ENCODE measurements at regions of chr17 and their contacts with region 1.

Region 1: DNA sequence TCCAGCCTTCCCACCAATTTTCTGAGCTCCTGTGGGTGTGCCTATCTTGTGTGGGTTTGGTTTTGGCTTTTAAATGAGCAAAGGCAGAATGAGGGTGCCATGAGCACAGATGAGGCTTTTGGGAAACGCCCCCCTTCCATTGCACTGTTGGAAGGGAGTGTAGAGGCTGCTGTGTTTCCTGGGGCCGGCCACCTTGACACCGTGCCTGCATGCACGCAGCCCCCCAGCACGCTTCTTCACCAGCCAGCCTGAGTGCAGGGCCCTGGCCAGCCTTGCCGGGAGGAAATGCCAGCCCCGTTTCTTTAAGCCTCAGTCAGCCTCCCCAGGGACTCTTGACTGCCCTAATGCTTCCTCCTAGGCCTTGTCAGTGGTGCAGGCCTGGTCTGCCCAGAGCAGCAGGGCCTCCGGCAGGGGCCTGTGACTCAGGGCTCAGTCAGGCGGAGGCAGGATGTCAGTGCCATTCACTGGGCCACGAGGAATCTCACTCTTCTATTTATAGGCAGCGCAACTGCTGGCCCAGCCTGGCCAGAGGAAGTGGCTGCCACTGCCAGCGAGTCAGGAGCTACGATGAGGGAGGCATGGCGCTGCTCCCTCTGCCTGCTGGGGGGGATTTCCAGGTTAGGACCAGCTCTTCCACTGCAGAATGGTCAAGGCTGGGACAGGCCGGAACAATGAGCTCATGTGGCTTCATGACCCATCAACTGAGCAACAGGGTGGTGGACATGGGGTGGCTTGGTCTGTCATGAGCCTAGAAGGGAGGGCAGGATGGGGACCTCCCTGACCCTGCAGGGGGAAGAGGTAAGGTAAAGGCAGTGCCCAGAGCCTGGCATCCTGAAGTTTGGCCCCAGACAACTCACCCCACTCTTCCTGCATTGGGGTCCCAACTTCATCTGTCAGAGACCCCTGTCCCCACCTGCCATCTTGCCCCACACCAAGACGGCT is 205.2 kb downstream of the RAB11FIP4 start:
- DNase-seq: peak; percentile 94 to 97
- ATAC-seq: peak; percentile 94
- H3K4me3 ChIP-seq: no peak overlapping the region
- H3K27ac ChIP-seq: peak overlapping the region; percentile 70 to 91
- H3K4me1 ChIP-seq: peaks cover 0 to 11% of the 10 kb centered on the region in 2 donors
- H3K27me3 ChIP-seq: no peaks in the 10 kb centered on the region

Region 2: GRCh38 chr17:31558748-31559644 is 37.7 kb before region 1 on chr17:
- intact Hi-C with region 1: loop called (anchors 5 kb)
- DNase-seq: peak; percentile 89 to 94
- ATAC-seq: peak; percentile 92
- H3K4me3 ChIP-seq: peak overlapping the region; percentile 74 to 97
- H3K27ac ChIP-seq: peak overlapping the region; percentile 79 to 96
- H3K4me1 ChIP-seq: peaks cover 0 to 3% of the 10 kb centered on the region in 2 donors
- H3K27me3 ChIP-seq: no peaks in the 10 kb centered on the region

Region 3: GRCh38 chr17:31581022-31581490 is 15.6 kb before region 1 on chr17:
- intact Hi-C with region 1: loop called in 1 of 2 experiments (anchors 1 kb)
- DNase-seq: peak; percentile 90 to 92
- ATAC-seq: peak; percentile 86
- H3K4me3 ChIP-seq: no peak overlapping the region
- H3K27ac ChIP-seq: peak overlapping the region; percentile 50 to 79
- H3K4me1 ChIP-seq: peaks cover 0 to 4% of the 10 kb centered on the region in 2 donors
- H3K27me3 ChIP-seq: no peaks in the 10 kb centered on the region

Region 4: DNA sequence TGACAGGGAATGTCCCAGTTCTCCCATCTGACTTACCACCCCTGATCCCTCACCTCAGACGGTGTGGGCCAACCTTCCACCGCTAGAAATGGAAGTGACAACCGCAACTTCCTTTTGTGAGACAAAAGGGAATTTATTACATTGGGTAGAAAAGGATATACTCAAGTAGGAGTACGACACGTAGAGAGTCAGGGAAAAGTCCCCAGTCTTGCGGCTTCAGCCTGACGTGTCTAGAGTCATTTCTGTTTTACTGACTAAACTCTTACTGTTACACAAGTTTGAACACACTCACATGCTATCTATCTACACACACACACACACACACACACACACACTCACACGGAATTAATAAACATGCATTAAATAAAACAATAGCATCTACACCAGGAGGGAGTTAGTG is 83.5 kb after region 1 on chr17:
- intact Hi-C with region 1: no loop called
- DNase-seq: no peak
- ATAC-seq: no peak
- H3K4me3 ChIP-seq: no peak overlapping the region
- H3K27ac ChIP-seq: no peak overlapping the region
- H3K4me1 ChIP-seq: no peaks in the 10 kb centered on the region
- H3K27me3 ChIP-seq: no peaks in the 10 kb centered on the region